Naive thymus-derived CD4-positive, alpha-beta T cell (primary cell): ENCODE measurements at regions of chr5 and their contacts with region 1.

Region 1: GRCh38 chr5:31825518-31826068 is 186.7 kb downstream of the PDZD2 start:
- DNase-seq: peak in 8 of 9 donors; percentile 7 to 77 (median 66)
- ATAC-seq: peak; percentile 91
- H3K4me3 ChIP-seq: no peak overlapping the region
- H3K4me3 Mint-ChIP-seq: peak overlapping the region in 9 of 10 donors; percentile 25 to 79 (median 64)
- H3K27ac ChIP-seq: no peak overlapping the region
- H3K27ac Mint-ChIP-seq: peak overlapping the region in 7 of 9 donors; percentile 17 to 80 (median 32)
- H3K4me1 ChIP-seq: no peaks in the 10 kb centered on the region
- H3K4me1 Mint-ChIP-seq: peaks cover 0 to 9% (median 7%) of the 10 kb centered on the region in 7 donors
- H3K27me3 ChIP-seq: no peaks in the 10 kb centered on the region
- H3K27me3 Mint-ChIP-seq: peaks cover 0 to 9% (median 7%) of the 10 kb centered on the region in 5 donors

Region 2: DNA sequence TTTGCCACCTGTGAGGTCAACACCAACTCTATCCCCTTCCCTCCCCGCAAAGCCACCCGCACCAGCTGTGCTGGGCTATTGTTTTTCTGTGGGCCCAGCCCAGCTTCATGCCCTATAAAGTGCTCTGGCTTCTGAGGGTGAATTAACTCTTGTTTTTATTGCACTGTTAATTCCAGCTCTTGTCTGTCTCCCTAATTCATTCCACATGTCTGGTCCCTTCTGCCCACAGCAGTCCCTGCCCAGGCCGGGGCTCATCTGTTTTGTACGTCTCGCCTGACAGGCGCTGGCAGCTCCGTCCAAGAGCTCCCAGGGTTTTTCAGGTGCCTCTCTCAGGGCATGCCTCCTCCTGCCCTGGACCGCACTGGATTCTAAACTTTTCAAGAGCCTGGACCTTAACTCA is 67.8 kb before region 1 on chr5:
- CTCF ChIA-PET with region 1: no interaction called
- POLR2A ChIA-PET with region 1: no interaction called
- intact Hi-C with region 1: no loop called
- DNase-seq: no peak
- ATAC-seq: no peak
- H3K4me3 ChIP-seq: no peak overlapping the region
- H3K4me3 Mint-ChIP-seq: no peak overlapping the region
- H3K27ac ChIP-seq: no peak overlapping the region
- H3K27ac Mint-ChIP-seq: no peak overlapping the region
- H3K4me1 ChIP-seq: no peaks in the 10 kb centered on the region
- H3K4me1 Mint-ChIP-seq: no peaks in the 10 kb centered on the region
- H3K27me3 ChIP-seq: no peaks in the 10 kb centered on the region
- H3K27me3 Mint-ChIP-seq: peaks cover 0 to 3% (median 0%) of the 10 kb centered on the region in 5 donors

Region 3: GRCh38 chr5:31911291-31912265 is 86.0 kb after region 1 on chr5:
- CTCF ChIA-PET with region 1: no interaction called
- POLR2A ChIA-PET with region 1: no interaction called
- intact Hi-C with region 1: loop called in 1 of 2 experiments (anchors 1 kb)
- DNase-seq: no peak
- ATAC-seq: no peak
- H3K4me3 ChIP-seq: no peak overlapping the region
- H3K4me3 Mint-ChIP-seq: no peak overlapping the region
- H3K27ac ChIP-seq: no peak overlapping the region
- H3K27ac Mint-ChIP-seq: no peak overlapping the region
- H3K4me1 ChIP-seq: peaks cover 0 to 6% of the 10 kb centered on the region in 2 donors
- H3K4me1 Mint-ChIP-seq: peaks cover 0 to 27% (median 22%) of the 10 kb centered on the region in 7 donors
- H3K27me3 ChIP-seq: no peaks in the 10 kb centered on the region
- H3K27me3 Mint-ChIP-seq: no peaks in the 10 kb centered on the region

Region 4: DNA sequence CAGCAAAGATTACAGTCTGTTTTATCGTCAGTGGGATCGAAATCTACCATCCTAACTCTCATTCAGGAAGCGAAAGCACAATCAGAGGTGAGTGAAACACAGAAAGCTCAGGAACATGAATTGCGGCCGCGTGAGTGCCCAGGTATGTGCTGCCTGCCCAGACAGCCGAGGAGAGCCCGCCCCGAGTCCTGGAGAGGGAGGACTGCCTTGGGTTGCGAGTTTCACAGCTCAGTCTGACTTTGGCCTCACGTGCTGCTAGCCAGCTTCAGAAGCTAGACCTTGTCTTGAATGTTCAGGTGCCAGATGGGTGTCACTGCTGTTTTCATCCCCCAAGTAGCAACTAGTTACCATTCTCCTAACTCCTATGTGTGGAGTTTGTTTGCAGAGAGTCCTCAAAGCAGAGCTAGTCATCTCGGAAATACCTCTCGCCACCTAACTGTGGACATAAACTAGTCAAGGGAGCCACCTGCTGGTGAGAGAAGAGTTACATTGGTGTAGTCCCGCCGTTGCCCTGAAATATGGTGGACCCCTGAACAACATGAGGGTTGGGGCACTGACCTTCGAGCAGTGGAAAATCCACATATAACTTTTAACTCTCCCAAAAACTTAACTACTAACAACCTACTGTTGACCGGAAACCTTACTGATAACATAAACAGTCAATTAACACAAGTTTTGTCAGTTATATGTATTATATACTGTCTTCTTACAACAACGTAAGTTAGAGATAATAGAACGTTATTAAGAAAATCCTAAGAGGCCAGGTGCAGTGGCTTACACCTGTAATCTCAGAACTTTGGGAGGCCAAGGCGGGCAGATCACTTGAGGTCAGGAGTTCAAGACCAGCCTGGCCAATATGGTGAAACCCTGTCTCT is 267.6 kb after region 1 on chr5:
- CTCF ChIA-PET with region 1: interaction called, 22 read pairs
- POLR2A ChIA-PET with region 1: no interaction called
- intact Hi-C with region 1: loop called (anchors 1 kb)
- DNase-seq: peak; percentile 27 to 76 (median 65)
- ATAC-seq: peak; percentile 89
- H3K4me3 ChIP-seq: no peak overlapping the region
- H3K4me3 Mint-ChIP-seq: no peak overlapping the region
- H3K27ac ChIP-seq: no peak overlapping the region
- H3K27ac Mint-ChIP-seq: peak overlapping the region in 2 of 9 donors; percentile 60 to 71
- H3K4me1 ChIP-seq: no peaks in the 10 kb centered on the region
- H3K4me1 Mint-ChIP-seq: peaks cover 0 to 7% (median 4%) of the 10 kb centered on the region in 7 donors
- H3K27me3 ChIP-seq: no peaks in the 10 kb centered on the region
- H3K27me3 Mint-ChIP-seq: no peaks in the 10 kb centered on the region

Region 5: GRCh38 chr5:32329308-32329834 is 503.8 kb after region 1 on chr5:
- CTCF ChIA-PET with region 1: no interaction called
- POLR2A ChIA-PET with region 1: no interaction called
- intact Hi-C with region 1: loop called in 1 of 2 experiments (anchors 5 kb)
- DNase-seq: peak; percentile 15 to 59 (median 45)
- ATAC-seq: peak; percentile 93
- H3K4me3 ChIP-seq: no peak overlapping the region
- H3K4me3 Mint-ChIP-seq: no peak overlapping the region
- H3K27ac ChIP-seq: no peak overlapping the region
- H3K27ac Mint-ChIP-seq: peak overlapping the region in 1 of 9 donors; percentile 1
- H3K4me1 ChIP-seq: no peaks in the 10 kb centered on the region
- H3K4me1 Mint-ChIP-seq: peaks cover 0 to 5% (median 0%) of the 10 kb centered on the region in 7 donors
- H3K27me3 ChIP-seq: no peaks in the 10 kb centered on the region
- H3K27me3 Mint-ChIP-seq: no peaks in the 10 kb centered on the region

Region 6: GRCh38 chr5:32745317-32745716 is 919.7 kb after region 1 on chr5:
- CTCF ChIA-PET with region 1: no interaction called
- POLR2A ChIA-PET with region 1: no interaction called
- intact Hi-C with region 1: no loop called
- DNase-seq: no peak
- ATAC-seq: no peak
- H3K4me3 ChIP-seq: no peak overlapping the region
- H3K4me3 Mint-ChIP-seq: no peak overlapping the region
- H3K27ac ChIP-seq: no peak overlapping the region
- H3K27ac Mint-ChIP-seq: peak overlapping the region in 1 of 9 donors; percentile 27
- H3K4me1 ChIP-seq: no peaks in the 10 kb centered on the region
- H3K4me1 Mint-ChIP-seq: no peaks in the 10 kb centered on the region
- H3K27me3 ChIP-seq: no peaks in the 10 kb centered on the region
- H3K27me3 Mint-ChIP-seq: peaks cover 2 to 13% (median 10%) of the 10 kb centered on the region in 5 donors